Naive thymus-derived CD4-positive, alpha-beta T cell (primary cell): ENCODE measurements at regions of chr18 and their contacts with region 1.

Region 1: GRCh38 chr18:69935319-69936190 is 12.1 kb downstream of the CD226 start:
- DNase-seq: peak; percentile 29 to 85 (median 75)
- ATAC-seq: peak; percentile 96
- H3K4me3 ChIP-seq: peak overlapping the region; percentile 36
- H3K4me3 Mint-ChIP-seq: peak overlapping the region in 1 of 10 donors; percentile 76
- H3K27ac ChIP-seq: peak overlapping the region; percentile 38
- H3K27ac Mint-ChIP-seq: no peak overlapping the region
- H3K4me1 ChIP-seq: peaks cover 44 to 53% of the 10 kb centered on the region in 2 donors
- H3K4me1 Mint-ChIP-seq: peaks cover 0 to 40% (median 18%) of the 10 kb centered on the region in 7 donors
- H3K27me3 ChIP-seq: no peaks in the 10 kb centered on the region
- H3K27me3 Mint-ChIP-seq: no peaks in the 10 kb centered on the region

Region 2: GRCh38 chr18:69736730-69737129 is 198.8 kb before region 1 on chr18:
- CTCF ChIA-PET with region 1: no interaction called
- POLR2A ChIA-PET with region 1: no interaction called
- intact Hi-C with region 1: no loop called
- DNase-seq: no peak
- ATAC-seq: no peak
- H3K4me3 ChIP-seq: no peak overlapping the region
- H3K4me3 Mint-ChIP-seq: no peak overlapping the region
- H3K27ac ChIP-seq: no peak overlapping the region
- H3K27ac Mint-ChIP-seq: no peak overlapping the region
- H3K4me1 ChIP-seq: no peaks in the 10 kb centered on the region
- H3K4me1 Mint-ChIP-seq: no peaks in the 10 kb centered on the region
- H3K27me3 ChIP-seq: no peaks in the 10 kb centered on the region
- H3K27me3 Mint-ChIP-seq: no peaks in the 10 kb centered on the region

Region 3: GRCh38 chr18:69858897-69859296 is 76.7 kb before region 1 on chr18:
- CTCF ChIA-PET with region 1: no interaction called
- POLR2A ChIA-PET with region 1: no interaction called
- intact Hi-C with region 1: no loop called
- DNase-seq: no peak
- ATAC-seq: no peak
- H3K4me3 ChIP-seq: no peak overlapping the region
- H3K4me3 Mint-ChIP-seq: no peak overlapping the region
- H3K27ac ChIP-seq: no peak overlapping the region
- H3K27ac Mint-ChIP-seq: peak overlapping the region in 1 of 9 donors; percentile 33
- H3K4me1 ChIP-seq: no peaks in the 10 kb centered on the region
- H3K4me1 Mint-ChIP-seq: peaks cover 0 to under 1% (median 0%) of the 10 kb centered on the region in 7 donors
- H3K27me3 ChIP-seq: no peaks in the 10 kb centered on the region
- H3K27me3 Mint-ChIP-seq: no peaks in the 10 kb centered on the region

Region 4: GRCh38 chr18:69874058-69874457 is 61.5 kb before region 1 on chr18:
- CTCF ChIA-PET with region 1: no interaction called
- POLR2A ChIA-PET with region 1: interaction called, 5 read pairs
- intact Hi-C with region 1: loop called in 1 of 2 experiments (anchors 2 kb)
- DNase-seq: no peak
- ATAC-seq: peak; percentile 10
- H3K4me3 ChIP-seq: no peak overlapping the region
- H3K4me3 Mint-ChIP-seq: no peak overlapping the region
- H3K27ac ChIP-seq: no peak overlapping the region
- H3K27ac Mint-ChIP-seq: peak overlapping the region in 2 of 9 donors; percentile 36 to 41
- H3K4me1 ChIP-seq: peaks cover 0 to 4% of the 10 kb centered on the region in 2 donors
- H3K4me1 Mint-ChIP-seq: peaks cover 13 to 50% (median 33%) of the 10 kb centered on the region in 7 donors
- H3K27me3 ChIP-seq: no peaks in the 10 kb centered on the region
- H3K27me3 Mint-ChIP-seq: no peaks in the 10 kb centered on the region

Region 5: DNA sequence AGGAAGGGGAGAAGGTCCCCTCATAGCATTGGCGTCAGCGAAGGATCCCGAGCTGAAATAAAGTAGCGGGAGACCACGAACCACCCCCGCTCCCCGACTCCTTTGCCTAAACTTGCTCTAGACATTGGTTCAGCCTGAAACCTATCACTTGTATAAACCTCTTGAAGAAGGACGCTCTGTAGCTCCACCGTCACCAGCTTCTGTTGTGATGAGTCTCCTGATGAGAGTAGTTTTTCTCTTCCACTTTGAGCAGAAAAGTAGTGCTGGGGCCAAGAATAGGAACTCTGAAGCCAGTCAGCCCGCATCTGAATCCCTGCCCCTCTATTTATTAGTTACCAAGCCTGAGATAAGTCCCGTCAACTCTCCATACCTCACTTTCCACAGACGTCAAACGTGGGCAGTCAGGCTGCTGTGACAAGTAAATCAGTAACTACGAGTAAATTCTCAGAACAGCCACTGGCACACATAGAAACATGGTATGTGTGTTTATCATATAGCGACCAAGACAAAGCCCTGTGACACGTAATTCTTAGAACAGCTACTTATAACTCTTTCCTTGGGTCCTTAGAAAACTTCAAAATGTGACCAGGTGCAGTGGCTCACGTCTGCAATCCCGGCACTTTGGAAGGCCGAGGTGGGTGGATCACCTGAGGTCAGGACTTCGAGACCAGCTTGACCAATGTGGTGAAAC is 49.6 kb before region 1 on chr18:
- CTCF ChIA-PET with region 1: no interaction called
- POLR2A ChIA-PET with region 1: no interaction called
- intact Hi-C with region 1: loop called in 1 of 2 experiments (anchors 1 kb)
- DNase-seq: peak in 1 of 9 donors; percentile 50
- ATAC-seq: peak; percentile 32
- H3K4me3 ChIP-seq: no peak overlapping the region
- H3K4me3 Mint-ChIP-seq: peak overlapping the region in 2 of 10 donors; percentile 36 to 89
- H3K27ac ChIP-seq: no peak overlapping the region
- H3K27ac Mint-ChIP-seq: peak overlapping the region in 6 of 9 donors; percentile 5 to 99 (median 62)
- H3K4me1 ChIP-seq: peaks cover 4 to 28% of the 10 kb centered on the region in 2 donors
- H3K4me1 Mint-ChIP-seq: peaks cover 38 to 81% (median 73%) of the 10 kb centered on the region in 7 donors
- H3K27me3 ChIP-seq: no peaks in the 10 kb centered on the region
- H3K27me3 Mint-ChIP-seq: no peaks in the 10 kb centered on the region

Region 6: DNA sequence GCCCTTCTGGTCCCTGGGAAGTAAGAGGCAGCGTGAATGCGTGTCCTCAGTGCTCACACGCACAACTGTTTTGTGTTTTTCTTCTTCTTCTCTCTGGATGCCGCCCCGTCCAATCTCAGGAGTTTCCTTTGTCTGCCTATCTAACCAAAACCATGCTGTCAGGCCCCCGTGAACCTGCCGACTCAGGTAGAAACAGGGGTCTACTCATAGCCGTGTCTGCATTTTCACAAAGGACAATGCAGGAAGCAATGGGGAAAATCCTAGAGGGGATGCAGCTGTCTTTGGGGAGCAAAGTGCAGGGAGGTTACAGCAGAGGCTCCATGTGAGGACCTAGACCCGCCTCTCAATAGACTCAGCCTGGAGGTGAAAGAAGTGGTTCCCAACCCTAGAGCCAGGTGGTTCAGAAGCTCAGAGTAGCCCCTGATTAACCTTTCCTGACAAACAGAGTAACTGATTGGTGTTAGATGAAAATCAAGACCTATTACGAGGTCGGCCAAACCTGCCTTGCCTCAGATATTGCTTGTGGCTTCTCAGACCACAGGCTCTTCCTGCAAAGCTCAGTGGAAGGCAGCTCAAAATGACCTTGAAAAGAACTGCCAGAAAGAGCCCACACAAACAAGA is 37.2 kb before region 1 on chr18:
- CTCF ChIA-PET with region 1: interaction called, 6 read pairs
- POLR2A ChIA-PET with region 1: interaction called, 13 read pairs
- intact Hi-C with region 1: loop called (anchors 1 kb)
- DNase-seq: peak in 6 of 9 donors; percentile 13 to 37 (median 20)
- ATAC-seq: peak; percentile 38
- H3K4me3 ChIP-seq: peak overlapping the region; percentile 52
- H3K4me3 Mint-ChIP-seq: peak overlapping the region; percentile 68 to 93 (median 84)
- H3K27ac ChIP-seq: peak overlapping the region; percentile 38
- H3K27ac Mint-ChIP-seq: peak overlapping the region; percentile 69 to 97 (median 90)
- H3K4me1 ChIP-seq: peaks cover 22 to 38% of the 10 kb centered on the region in 2 donors
- H3K4me1 Mint-ChIP-seq: peaks cover 49 to 76% (median 68%) of the 10 kb centered on the region in 7 donors
- H3K27me3 ChIP-seq: no peaks in the 10 kb centered on the region
- H3K27me3 Mint-ChIP-seq: no peaks in the 10 kb centered on the region

Region 7: DNA sequence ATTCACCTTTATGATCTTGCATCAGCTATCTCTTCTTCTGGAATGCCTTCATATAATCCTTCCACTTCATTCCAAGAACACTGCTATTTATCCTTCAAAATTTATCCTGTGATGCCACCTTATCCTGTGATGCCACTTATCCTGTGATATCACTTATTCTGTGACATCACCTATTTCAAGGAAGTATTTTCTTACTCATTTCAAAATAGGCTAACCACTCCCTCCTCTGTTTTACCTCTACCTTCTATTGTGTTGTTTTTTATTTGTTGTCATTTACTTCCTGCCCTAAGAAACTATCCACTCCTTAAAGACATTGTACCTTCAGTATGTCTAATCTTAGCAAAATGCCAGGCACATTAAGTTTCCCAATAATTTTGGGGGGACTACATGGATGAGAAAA is 26.7 kb before region 1 on chr18:
- CTCF ChIA-PET with region 1: no interaction called
- POLR2A ChIA-PET with region 1: interaction called, 4 read pairs
- intact Hi-C with region 1: loop called (anchors 1 to 2 kb)
- DNase-seq: no peak
- ATAC-seq: no peak
- H3K4me3 ChIP-seq: no peak overlapping the region
- H3K4me3 Mint-ChIP-seq: peak overlapping the region in 3 of 10 donors; percentile 6 to 55 (median 33)
- H3K27ac ChIP-seq: no peak overlapping the region
- H3K27ac Mint-ChIP-seq: peak overlapping the region in 7 of 9 donors; percentile 11 to 86 (median 27)
- H3K4me1 ChIP-seq: peaks cover 14 to 15% of the 10 kb centered on the region in 2 donors
- H3K4me1 Mint-ChIP-seq: peaks cover 40 to 69% (median 55%) of the 10 kb centered on the region in 7 donors
- H3K27me3 ChIP-seq: no peaks in the 10 kb centered on the region
- H3K27me3 Mint-ChIP-seq: no peaks in the 10 kb centered on the region

Region 8: DNA sequence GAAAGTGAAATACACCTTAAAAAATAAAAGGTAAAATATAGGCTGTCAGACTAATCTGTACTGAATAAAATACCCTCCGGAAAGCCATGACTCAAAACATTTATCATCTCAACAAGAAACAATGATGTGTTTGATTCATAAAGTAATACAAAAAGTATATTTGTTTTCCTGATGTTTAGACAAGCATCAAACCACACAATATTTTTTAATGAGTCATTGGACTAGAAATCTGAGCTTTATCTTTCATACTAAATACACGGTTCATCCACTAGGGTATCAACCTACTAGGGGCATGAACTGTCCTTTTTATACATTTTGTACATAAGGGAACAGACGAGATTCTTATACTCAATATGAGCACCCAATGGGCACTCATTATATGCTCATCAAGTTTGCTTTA is 19.1 kb before region 1 on chr18:
- CTCF ChIA-PET with region 1: no interaction called
- POLR2A ChIA-PET with region 1: interaction called, 3 read pairs
- intact Hi-C with region 1: loop called in 1 of 2 experiments (anchors 2 kb)
- DNase-seq: no peak
- ATAC-seq: no peak
- H3K4me3 ChIP-seq: no peak overlapping the region
- H3K4me3 Mint-ChIP-seq: no peak overlapping the region
- H3K27ac ChIP-seq: no peak overlapping the region
- H3K27ac Mint-ChIP-seq: peak overlapping the region in 2 of 9 donors; percentile 7 to 52
- H3K4me1 ChIP-seq: peaks cover 3 to 5% of the 10 kb centered on the region in 2 donors
- H3K4me1 Mint-ChIP-seq: peaks cover 33 to 72% (median 61%) of the 10 kb centered on the region in 7 donors
- H3K27me3 ChIP-seq: no peaks in the 10 kb centered on the region
- H3K27me3 Mint-ChIP-seq: no peaks in the 10 kb centered on the region

Region 9: GRCh38 chr18:69948919-69949537 is 13.5 kb after region 1 on chr18:
- CTCF ChIA-PET with region 1: interaction called, 7 read pairs
- POLR2A ChIA-PET with region 1: interaction called, 41 read pairs
- intact Hi-C with region 1: loop called (anchors 1 kb)
- DNase-seq: peak in 1 of 9 donors; percentile 53
- ATAC-seq: peak; percentile 73
- H3K4me3 ChIP-seq: peak overlapping the region; percentile 0
- H3K4me3 Mint-ChIP-seq: no peak overlapping the region
- H3K27ac ChIP-seq: peak overlapping the region; percentile 55
- H3K27ac Mint-ChIP-seq: no peak overlapping the region
- H3K4me1 ChIP-seq: peaks cover 45 to 77% of the 10 kb centered on the region in 2 donors
- H3K4me1 Mint-ChIP-seq: peaks cover 12 to 63% (median 42%) of the 10 kb centered on the region in 7 donors
- H3K27me3 ChIP-seq: no peaks in the 10 kb centered on the region
- H3K27me3 Mint-ChIP-seq: no peaks in the 10 kb centered on the region